OCI-LY7 (cell line): ENCODE measurements at regions of chr16 and their contacts with region 1.

Region 1: GRCh38 chr16:35713762-35714650 is 2254.6 kb downstream of the TP53TG3F start:
- DNase-seq: no peak
- H3K4me3 ChIP-seq: no peak overlapping the region
- H3K27ac ChIP-seq: no peak overlapping the region
- H3K4me1 ChIP-seq: no peaks in the 10 kb centered on the region
- CTCF ChIP-seq: no peak

Region 2: DNA sequence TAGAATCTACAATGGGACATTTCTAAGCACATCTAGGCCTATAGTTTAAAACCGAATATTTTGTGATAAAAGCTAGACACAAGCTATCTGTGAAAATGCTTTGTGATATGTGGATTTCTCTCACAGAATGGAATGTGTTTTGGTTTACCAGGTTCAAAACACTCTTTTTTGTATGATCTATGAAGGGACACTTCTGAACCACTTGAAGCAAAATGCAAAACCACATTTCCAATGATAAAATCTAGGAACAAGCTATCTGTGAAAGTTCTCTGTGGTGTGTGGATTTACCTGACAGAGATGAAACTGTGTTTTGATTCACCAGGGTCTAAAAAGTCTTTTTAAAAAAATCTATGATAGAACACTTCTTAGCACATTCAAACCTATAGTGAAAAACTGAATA is 62.2 kb before region 1 on chr16:
- CTCF ChIA-PET with region 1: no interaction called
- POLR2A ChIA-PET with region 1: no interaction called
- intact Hi-C with region 1: loop called (anchors 10 kb)
- DNase-seq: no peak
- H3K4me3 ChIP-seq: no peak overlapping the region
- H3K27ac ChIP-seq: no peak overlapping the region
- H3K4me1 ChIP-seq: no peaks in the 10 kb centered on the region
- CTCF ChIP-seq: no peak